ENCODE measurements at regions of chr16 and their contacts with region 1.

Region 1: DNA sequence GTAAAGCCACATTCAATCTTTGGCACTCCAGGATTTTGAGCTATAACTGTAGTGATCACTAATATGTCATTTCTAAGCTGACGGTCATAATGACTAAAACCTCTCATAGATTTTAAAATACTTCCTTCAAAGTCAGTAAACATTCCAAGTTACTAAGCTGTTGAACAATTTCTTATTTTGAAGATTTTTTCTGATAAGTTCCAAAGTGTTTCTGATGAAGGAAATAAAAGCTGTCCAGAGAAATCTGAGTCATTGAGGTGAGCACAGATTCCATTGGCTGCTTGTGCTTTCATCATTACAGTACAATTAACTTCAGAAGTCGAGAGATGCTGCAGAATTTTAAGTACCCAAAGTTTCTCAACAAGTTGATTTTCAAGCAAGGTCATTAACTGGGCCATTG is 23.9 kb downstream of the NLRC5 start:
- DNase-seq: no peak
- ATAC-seq: no peak
- H3K4me3 Mint-ChIP-seq: no peak overlapping the region
- H3K27ac Mint-ChIP-seq: peak overlapping the region; percentile 88
- H3K4me1 Mint-ChIP-seq: peaks cover 58% of the 10 kb centered on the region
- H3K27me3 Mint-ChIP-seq: no peaks in the 10 kb centered on the region
- CTCF ChIP-seq: no peak

Region 2: DNA sequence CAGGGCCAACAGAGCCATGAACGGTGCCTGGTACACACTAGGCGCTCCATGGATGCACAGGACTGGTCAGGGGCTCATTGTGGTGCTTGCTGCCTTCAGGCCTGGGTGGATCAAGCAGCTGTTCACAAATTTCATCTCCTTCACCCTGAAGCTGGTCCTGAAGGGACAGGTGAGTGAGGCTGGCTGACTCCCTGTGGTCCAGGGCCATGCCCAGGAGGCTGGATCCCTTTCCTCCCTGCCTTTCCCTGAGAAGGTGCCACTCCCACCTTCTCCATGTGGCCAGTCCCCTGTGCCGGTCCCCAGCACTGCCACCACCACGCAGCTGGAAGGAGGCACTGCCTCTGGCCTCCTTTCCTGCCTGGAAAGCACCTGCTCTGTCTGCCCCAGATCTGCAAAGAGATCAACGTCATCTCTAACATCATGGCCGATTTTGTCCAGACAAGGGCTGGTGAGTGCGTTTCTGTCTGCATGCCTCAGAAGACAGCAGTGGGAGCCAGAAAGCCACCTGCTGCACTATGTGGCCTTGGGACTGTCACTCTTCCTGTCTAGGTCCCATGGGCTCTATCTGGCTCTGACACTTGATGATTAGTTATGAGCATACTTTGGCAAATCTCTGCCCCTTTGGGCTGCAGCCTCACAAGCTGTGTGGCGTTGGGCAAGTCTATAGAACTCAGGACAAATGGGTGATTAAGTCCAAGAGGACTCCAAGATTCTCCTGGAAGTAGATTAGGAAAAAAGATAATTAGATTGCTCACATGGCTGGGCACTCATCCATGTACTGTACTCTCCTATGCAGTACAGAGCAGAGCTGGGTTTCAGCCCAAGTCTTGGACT is 42.1 kb before region 1 on chr16:
- CTCF ChIA-PET with region 1: interaction called, 7 read pairs
- POLR2A ChIA-PET with region 1: interaction called, 12 read pairs
- intact Hi-C with region 1: no loop called
- DNase-seq: peak; percentile 53
- ATAC-seq: peak; percentile 96
- H3K4me3 Mint-ChIP-seq: peak overlapping the region; percentile 66
- H3K27ac Mint-ChIP-seq: peak overlapping the region; percentile 97
- H3K4me1 Mint-ChIP-seq: peaks cover 66% of the 10 kb centered on the region
- H3K27me3 Mint-ChIP-seq: no peaks in the 10 kb centered on the region
- CTCF ChIP-seq: no peak

Region 3: GRCh38 chr16:56994311-56994710 is 18.9 kb before region 1 on chr16:
- CTCF ChIA-PET with region 1: interaction called, 3 read pairs
- POLR2A ChIA-PET with region 1: interaction called, 25 read pairs
- intact Hi-C with region 1: loop called (anchors 1 kb)
- DNase-seq: no peak
- ATAC-seq: no peak
- H3K4me3 Mint-ChIP-seq: peak overlapping the region; percentile 2
- H3K27ac Mint-ChIP-seq: peak overlapping the region; percentile 30
- H3K4me1 Mint-ChIP-seq: peaks cover 79% of the 10 kb centered on the region
- H3K27me3 Mint-ChIP-seq: no peaks in the 10 kb centered on the region
- CTCF ChIP-seq: no peak

Region 4: GRCh38 chr16:57000271-57001025 is 12.8 kb before region 1 on chr16:
- CTCF ChIA-PET with region 1: interaction called, 3 read pairs
- POLR2A ChIA-PET with region 1: interaction called, 25 read pairs
- intact Hi-C with region 1: loop called (anchors 1 kb)
- DNase-seq: peak; percentile 40
- ATAC-seq: peak; percentile 72
- H3K4me3 Mint-ChIP-seq: peak overlapping the region; percentile 55
- H3K27ac Mint-ChIP-seq: peak overlapping the region; percentile 90
- H3K4me1 Mint-ChIP-seq: peaks cover 87% of the 10 kb centered on the region
- H3K27me3 Mint-ChIP-seq: no peaks in the 10 kb centered on the region
- CTCF ChIP-seq: no peak

Region 5: DNA sequence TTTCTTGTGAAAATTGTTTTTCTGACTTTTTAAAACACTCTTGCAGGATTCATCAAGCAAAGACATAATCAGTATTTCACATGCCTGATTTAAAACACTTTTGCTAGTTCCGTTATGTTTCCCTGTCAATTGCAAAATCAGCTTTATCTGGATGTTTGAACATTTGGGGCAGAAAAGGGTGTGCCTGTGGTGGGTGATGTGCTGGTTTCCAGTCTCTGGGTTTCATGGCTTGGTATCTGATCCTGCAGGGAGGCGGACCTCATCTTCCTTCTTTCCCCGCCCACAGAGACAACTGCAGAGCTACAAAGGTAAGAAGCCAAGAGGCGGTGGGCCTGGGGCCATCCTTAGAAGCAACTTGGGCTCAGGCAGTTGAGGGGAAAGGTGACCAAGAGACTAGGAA is 17.9 kb after region 1 on chr16:
- CTCF ChIA-PET with region 1: no interaction called
- POLR2A ChIA-PET with region 1: interaction called, 10 read pairs
- intact Hi-C with region 1: no loop called
- DNase-seq: no peak
- ATAC-seq: no peak
- H3K4me3 Mint-ChIP-seq: no peak overlapping the region
- H3K27ac Mint-ChIP-seq: peak overlapping the region; percentile 12
- H3K4me1 Mint-ChIP-seq: peaks cover 30% of the 10 kb centered on the region
- H3K27me3 Mint-ChIP-seq: no peaks in the 10 kb centered on the region
- CTCF ChIP-seq: no peak